ENCODE measurements at regions of chr3 and their contacts with region 1.

Region 1: GRCh38 chr3:23859016-23859743 is 53.4 kb downstream of the UBE2E1 start:
- DNase-seq: peak in 1 of 35 experiments; percentile 7
- ATAC-seq: peak in 2 of 4 experiments; percentile 36 to 37
- H3K4me3 ChIP-seq: no peak overlapping the region
- H3K4me3 Mint-ChIP-seq: peak overlapping the region in 1 of 3 donors; percentile 6
- H3K27ac ChIP-seq: no peak overlapping the region
- H3K27ac Mint-ChIP-seq: peak overlapping the region in 1 of 2 donors; percentile 19
- H3K4me1 ChIP-seq: peaks cover 9 to 23% of the 10 kb centered on the region in 2 experiments
- H3K4me1 Mint-ChIP-seq: peaks cover 73 to 80% (median 75%) of the 10 kb centered on the region in 3 donors
- H3K27me3 ChIP-seq: no peaks in the 10 kb centered on the region
- H3K27me3 Mint-ChIP-seq: no peaks in the 10 kb centered on the region

Region 2: DNA sequence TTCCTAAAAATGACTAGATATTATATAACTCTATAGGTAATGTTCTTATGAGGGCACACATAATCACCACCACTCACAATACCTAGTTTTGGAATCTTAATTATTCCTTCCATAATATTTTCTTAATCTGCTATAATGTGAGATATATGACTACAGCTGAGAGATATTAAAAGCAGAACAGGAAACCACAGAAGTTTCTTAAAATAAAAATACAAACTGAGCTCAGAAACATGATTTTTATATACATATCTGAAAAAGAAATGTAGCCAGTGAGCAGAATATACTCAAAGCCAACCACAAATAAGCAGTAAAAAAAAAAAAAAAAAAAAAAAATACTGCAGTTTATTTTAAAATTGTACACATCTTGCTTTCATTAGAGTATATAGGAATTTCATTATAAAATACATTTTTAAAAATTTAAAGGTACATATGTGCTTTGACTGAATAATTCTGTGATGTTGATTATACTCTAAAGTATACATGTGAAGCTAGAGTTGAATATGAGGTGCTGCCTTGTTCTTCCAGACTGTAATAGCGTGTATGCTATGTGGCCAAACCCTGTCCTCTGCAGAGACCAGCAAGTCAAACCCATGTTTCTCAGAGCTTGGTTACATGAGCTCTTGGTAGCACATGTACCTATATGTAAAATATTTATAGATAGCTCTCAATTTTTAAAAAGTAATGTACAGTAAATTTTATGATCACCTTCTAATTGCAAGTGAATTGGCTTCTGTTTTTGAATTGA is 481.1 kb before region 1 on chr3:
- CTCF ChIA-PET with region 1: no interaction called
- POLR2A ChIA-PET with region 1: interaction called in 1 of 2 experiments, 13 read pairs
- DNase-seq: no peak
- ATAC-seq: no peak
- H3K4me3 ChIP-seq: no peak overlapping the region
- H3K4me3 Mint-ChIP-seq: no peak overlapping the region
- H3K27ac ChIP-seq: no peak overlapping the region
- H3K27ac Mint-ChIP-seq: no peak overlapping the region
- H3K4me1 ChIP-seq: no peaks in the 10 kb centered on the region
- H3K4me1 Mint-ChIP-seq: peaks cover 6 to 14% (median 12%) of the 10 kb centered on the region in 3 donors
- H3K27me3 ChIP-seq: no peaks in the 10 kb centered on the region
- H3K27me3 Mint-ChIP-seq: no peaks in the 10 kb centered on the region

Region 3: DNA sequence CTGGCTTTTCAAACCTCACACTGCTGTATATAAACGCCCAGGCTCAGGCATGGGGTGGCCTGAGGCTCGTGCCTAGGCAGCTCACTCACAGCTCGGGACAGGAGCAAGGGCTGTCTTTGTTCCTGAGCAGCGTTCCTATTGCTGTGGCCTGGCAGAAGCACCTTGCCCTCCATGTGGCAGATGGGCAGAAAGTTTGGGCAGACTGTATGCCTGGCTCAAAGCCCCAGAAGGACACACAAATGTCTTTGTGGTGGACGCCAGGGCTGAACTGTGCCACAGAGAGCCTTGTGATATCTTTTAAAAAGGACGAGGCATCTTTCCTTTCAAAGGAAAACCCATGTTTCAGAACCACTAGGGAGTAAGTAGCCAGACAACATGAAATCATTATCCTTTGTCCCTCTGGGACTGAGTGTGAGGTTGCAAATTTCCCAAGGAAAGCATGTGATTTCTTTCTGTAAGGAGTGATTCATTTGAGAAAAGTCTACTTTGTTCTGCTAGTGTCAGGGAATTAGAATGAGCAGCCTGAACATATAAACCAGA is 82.8 kb before region 1 on chr3:
- CTCF ChIA-PET with region 1: no interaction called
- POLR2A ChIA-PET with region 1: interaction called in 1 of 2 experiments, 16 read pairs
- DNase-seq: no peak
- ATAC-seq: no peak
- H3K4me3 ChIP-seq: no peak overlapping the region
- H3K4me3 Mint-ChIP-seq: no peak overlapping the region
- H3K27ac ChIP-seq: no peak overlapping the region
- H3K27ac Mint-ChIP-seq: no peak overlapping the region
- H3K4me1 ChIP-seq: no peaks in the 10 kb centered on the region
- H3K4me1 Mint-ChIP-seq: no peaks in the 10 kb centered on the region
- H3K27me3 ChIP-seq: peaks cover 0 to 2% of the 10 kb centered on the region in 2 experiments
- H3K27me3 Mint-ChIP-seq: peaks cover 6% of the 10 kb centered on the region in 2 donors

Region 4: GRCh38 chr3:23845326-23846221 is 13.6 kb before region 1 on chr3:
- CTCF ChIA-PET with region 1: interaction called in 1 of 2 experiments, 10 read pairs
- POLR2A ChIA-PET with region 1: no interaction called
- DNase-seq: no peak
- ATAC-seq: no peak
- H3K4me3 ChIP-seq: no peak overlapping the region
- H3K4me3 Mint-ChIP-seq: no peak overlapping the region
- H3K27ac ChIP-seq: no peak overlapping the region
- H3K27ac Mint-ChIP-seq: no peak overlapping the region
- H3K4me1 ChIP-seq: no peaks in the 10 kb centered on the region
- H3K4me1 Mint-ChIP-seq: peaks cover 32 to 39% (median 35%) of the 10 kb centered on the region in 3 donors
- H3K27me3 ChIP-seq: no peaks in the 10 kb centered on the region
- H3K27me3 Mint-ChIP-seq: no peaks in the 10 kb centered on the region

Region 5: DNA sequence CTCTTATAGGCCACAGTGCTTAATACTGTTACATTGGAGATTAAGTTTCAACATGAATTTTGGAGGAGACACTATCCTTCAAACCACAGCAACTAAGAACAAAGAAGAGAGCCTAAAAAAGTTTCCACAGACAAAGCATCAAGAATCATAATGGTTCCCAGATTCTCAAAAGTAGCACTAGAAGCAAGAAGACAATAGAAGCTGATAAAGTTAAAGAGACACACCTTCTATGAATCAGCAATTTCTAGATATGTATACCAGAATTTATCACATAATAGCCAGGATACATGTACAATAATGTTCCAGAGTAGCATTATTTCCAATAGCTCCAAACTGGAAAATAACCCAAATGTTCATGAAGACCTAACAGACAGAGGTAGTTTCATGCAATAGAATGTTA is 45.4 kb after region 1 on chr3:
- CTCF ChIA-PET with region 1: interaction called in 1 of 2 experiments, 10 read pairs
- POLR2A ChIA-PET with region 1: no interaction called
- DNase-seq: no peak
- ATAC-seq: no peak
- H3K4me3 ChIP-seq: no peak overlapping the region
- H3K4me3 Mint-ChIP-seq: no peak overlapping the region
- H3K27ac ChIP-seq: no peak overlapping the region
- H3K27ac Mint-ChIP-seq: no peak overlapping the region
- H3K4me1 ChIP-seq: no peaks in the 10 kb centered on the region
- H3K4me1 Mint-ChIP-seq: no peaks in the 10 kb centered on the region
- H3K27me3 ChIP-seq: no peaks in the 10 kb centered on the region
- H3K27me3 Mint-ChIP-seq: no peaks in the 10 kb centered on the region

Region 6: DNA sequence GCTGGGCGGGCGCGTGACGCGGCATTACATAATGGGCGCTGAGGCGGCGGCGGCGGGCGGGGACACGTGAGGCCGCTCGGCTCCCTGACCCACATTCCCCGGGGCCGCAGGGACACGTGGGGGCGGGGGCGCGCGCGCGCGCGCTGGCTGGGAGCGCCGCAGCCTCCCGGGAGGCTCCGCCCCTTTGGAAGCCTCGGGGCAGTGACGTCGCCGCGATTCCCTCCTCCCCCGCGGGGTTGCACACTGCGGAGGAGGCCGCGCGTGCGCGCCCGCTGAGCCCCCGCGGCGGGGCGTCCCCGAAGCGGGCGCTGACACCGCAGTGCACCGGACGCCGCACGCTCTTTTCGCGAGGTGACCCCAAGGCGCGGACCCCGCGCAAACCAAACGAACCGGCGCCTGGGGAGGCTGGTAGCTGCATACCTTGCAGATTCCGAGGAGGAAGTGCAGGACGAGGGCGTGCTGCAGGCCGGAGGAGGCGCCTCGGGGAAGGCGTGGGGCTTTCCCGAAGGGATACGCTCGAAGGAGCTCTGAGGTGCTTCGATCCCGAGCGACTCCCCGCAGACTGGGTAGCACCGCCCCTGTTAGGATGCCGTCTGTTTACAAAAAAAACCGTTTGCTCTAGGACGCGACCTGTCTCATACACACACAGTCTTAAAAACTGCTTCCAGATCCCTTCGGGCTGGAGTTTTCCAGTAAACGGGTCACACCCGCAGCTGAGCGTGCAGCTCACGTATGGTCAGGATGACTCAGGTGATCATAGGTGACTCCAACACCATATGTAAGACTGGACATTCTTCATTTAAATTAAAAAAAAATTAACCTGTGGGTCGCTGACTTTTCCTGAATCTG is 86.9 kb after region 1 on chr3:
- CTCF ChIA-PET with region 1: no interaction called
- POLR2A ChIA-PET with region 1: no interaction called
- DNase-seq: peak; percentile 92 to 99 (median 97)
- ATAC-seq: peak; percentile 80 to 84 (median 83)
- H3K4me3 ChIP-seq: peak overlapping the region; percentile 71 to 74
- H3K4me3 Mint-ChIP-seq: peak overlapping the region; percentile 80 to 81 (median 81)
- H3K27ac ChIP-seq: peak overlapping the region; percentile 93
- H3K27ac Mint-ChIP-seq: peak overlapping the region; percentile 71 to 87
- H3K4me1 ChIP-seq: peaks cover 16 to 37% of the 10 kb centered on the region in 2 experiments
- H3K4me1 Mint-ChIP-seq: peaks cover 45 to 55% (median 51%) of the 10 kb centered on the region in 3 donors
- H3K27me3 ChIP-seq: no peaks in the 10 kb centered on the region
- H3K27me3 Mint-ChIP-seq: no peaks in the 10 kb centered on the region